CD4-positive, alpha-beta memory T cell (primary cell): ENCODE measurements at regions of chr3 and their contacts with region 1.

Region 1: GRCh38 chr3:43162230-43163084 is 56.6 kb upstream of the POMGNT2 start:
- DNase-seq: peak; percentile 66 to 79 (median 78)
- H3K4me3 ChIP-seq: peak overlapping the region; percentile 12 to 47
- H3K4me3 Mint-ChIP-seq: peak overlapping the region; percentile 80 to 92 (median 86)
- H3K27ac ChIP-seq: peak overlapping the region; percentile 60
- H3K27ac Mint-ChIP-seq: peak overlapping the region; percentile 92 to 100 (median 99)
- H3K4me1 ChIP-seq: peaks cover 27% of the 10 kb centered on the region
- H3K4me1 Mint-ChIP-seq: peaks cover 20 to 32% (median 27%) of the 10 kb centered on the region in 4 donors
- H3K27me3 ChIP-seq: no peaks in the 10 kb centered on the region
- H3K27me3 Mint-ChIP-seq: no peaks in the 10 kb centered on the region

Region 2: GRCh38 chr3:42961633-42962032 is 200.8 kb before region 1 on chr3:
- CTCF ChIA-PET with region 1: interaction called, 38 read pairs
- POLR2A ChIA-PET with region 1: no interaction called
- intact Hi-C with region 1: loop called (anchors 1 kb)
- DNase-seq: peak in 4 of 5 donors; percentile 28 to 40 (median 38)
- H3K4me3 ChIP-seq: no peak overlapping the region
- H3K4me3 Mint-ChIP-seq: no peak overlapping the region
- H3K27ac ChIP-seq: no peak overlapping the region
- H3K27ac Mint-ChIP-seq: peak overlapping the region in 1 of 7 donors; percentile 9
- H3K4me1 ChIP-seq: peaks cover 4% of the 10 kb centered on the region
- H3K4me1 Mint-ChIP-seq: peaks cover 10 to 16% (median 14%) of the 10 kb centered on the region in 4 donors
- H3K27me3 ChIP-seq: no peaks in the 10 kb centered on the region
- H3K27me3 Mint-ChIP-seq: peaks cover 1 to 2% of the 10 kb centered on the region in 2 donors

Region 3: DNA sequence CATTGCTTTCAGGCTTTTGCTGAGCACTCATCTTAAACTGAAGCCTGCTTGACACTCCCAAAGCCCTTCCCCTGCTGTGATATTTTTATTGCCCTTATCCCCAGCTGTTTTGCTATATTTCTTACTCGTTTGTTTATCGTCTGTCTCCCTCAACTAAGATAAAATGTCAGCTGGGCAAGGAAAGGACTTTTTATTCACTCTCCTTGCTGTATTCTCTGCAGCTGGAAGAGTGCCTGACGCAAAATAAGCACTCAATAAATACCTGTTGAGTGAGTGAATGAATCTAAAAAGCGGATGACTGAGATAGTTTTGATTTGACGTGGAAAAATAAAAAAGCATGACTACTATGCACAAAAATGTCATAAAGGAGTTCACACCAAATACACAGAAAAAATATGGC is 28.2 kb after region 1 on chr3:
- CTCF ChIA-PET with region 1: interaction called, 41 read pairs
- POLR2A ChIA-PET with region 1: interaction called, 51 read pairs
- intact Hi-C with region 1: loop called (anchors 1 kb)
- DNase-seq: no peak
- H3K4me3 ChIP-seq: no peak overlapping the region
- H3K4me3 Mint-ChIP-seq: no peak overlapping the region
- H3K27ac ChIP-seq: no peak overlapping the region
- H3K27ac Mint-ChIP-seq: no peak overlapping the region
- H3K4me1 ChIP-seq: peaks cover 46% of the 10 kb centered on the region
- H3K4me1 Mint-ChIP-seq: peaks cover 34 to 44% (median 40%) of the 10 kb centered on the region in 4 donors
- H3K27me3 ChIP-seq: no peaks in the 10 kb centered on the region
- H3K27me3 Mint-ChIP-seq: no peaks in the 10 kb centered on the region

Region 4: GRCh38 chr3:43215663-43216275 is 53.3 kb after region 1 on chr3:
- CTCF ChIA-PET with region 1: interaction called, 42 read pairs
- POLR2A ChIA-PET with region 1: interaction called, 6 read pairs
- intact Hi-C with region 1: no loop called
- DNase-seq: no peak
- H3K4me3 ChIP-seq: no peak overlapping the region
- H3K4me3 Mint-ChIP-seq: peak overlapping the region in 1 of 8 donors; percentile 43
- H3K27ac ChIP-seq: no peak overlapping the region
- H3K27ac Mint-ChIP-seq: peak overlapping the region in 5 of 7 donors; percentile 8 to 47 (median 32)
- H3K4me1 ChIP-seq: peaks cover 13% of the 10 kb centered on the region
- H3K4me1 Mint-ChIP-seq: peaks cover 22 to 43% (median 34%) of the 10 kb centered on the region in 4 donors
- H3K27me3 ChIP-seq: no peaks in the 10 kb centered on the region
- H3K27me3 Mint-ChIP-seq: peaks cover 0 to 1% of the 10 kb centered on the region in 2 donors

Region 5: GRCh38 chr3:43296565-43296964 is 134.1 kb after region 1 on chr3:
- CTCF ChIA-PET with region 1: interaction called, 14 read pairs
- POLR2A ChIA-PET with region 1: interaction called, 20 read pairs
- intact Hi-C with region 1: no loop called
- DNase-seq: peak; percentile 76 to 86 (median 83)
- H3K4me3 ChIP-seq: peak overlapping the region in 1 of 2 donors; percentile 16
- H3K4me3 Mint-ChIP-seq: peak overlapping the region; percentile 67 to 86 (median 79)
- H3K27ac ChIP-seq: peak overlapping the region; percentile 59
- H3K27ac Mint-ChIP-seq: peak overlapping the region; percentile 87 to 97 (median 94)
- H3K4me1 ChIP-seq: peaks cover 97% of the 10 kb centered on the region
- H3K4me1 Mint-ChIP-seq: peaks cover 59 to 88% (median 72%) of the 10 kb centered on the region in 4 donors
- H3K27me3 ChIP-seq: no peaks in the 10 kb centered on the region
- H3K27me3 Mint-ChIP-seq: no peaks in the 10 kb centered on the region

Region 6: DNA sequence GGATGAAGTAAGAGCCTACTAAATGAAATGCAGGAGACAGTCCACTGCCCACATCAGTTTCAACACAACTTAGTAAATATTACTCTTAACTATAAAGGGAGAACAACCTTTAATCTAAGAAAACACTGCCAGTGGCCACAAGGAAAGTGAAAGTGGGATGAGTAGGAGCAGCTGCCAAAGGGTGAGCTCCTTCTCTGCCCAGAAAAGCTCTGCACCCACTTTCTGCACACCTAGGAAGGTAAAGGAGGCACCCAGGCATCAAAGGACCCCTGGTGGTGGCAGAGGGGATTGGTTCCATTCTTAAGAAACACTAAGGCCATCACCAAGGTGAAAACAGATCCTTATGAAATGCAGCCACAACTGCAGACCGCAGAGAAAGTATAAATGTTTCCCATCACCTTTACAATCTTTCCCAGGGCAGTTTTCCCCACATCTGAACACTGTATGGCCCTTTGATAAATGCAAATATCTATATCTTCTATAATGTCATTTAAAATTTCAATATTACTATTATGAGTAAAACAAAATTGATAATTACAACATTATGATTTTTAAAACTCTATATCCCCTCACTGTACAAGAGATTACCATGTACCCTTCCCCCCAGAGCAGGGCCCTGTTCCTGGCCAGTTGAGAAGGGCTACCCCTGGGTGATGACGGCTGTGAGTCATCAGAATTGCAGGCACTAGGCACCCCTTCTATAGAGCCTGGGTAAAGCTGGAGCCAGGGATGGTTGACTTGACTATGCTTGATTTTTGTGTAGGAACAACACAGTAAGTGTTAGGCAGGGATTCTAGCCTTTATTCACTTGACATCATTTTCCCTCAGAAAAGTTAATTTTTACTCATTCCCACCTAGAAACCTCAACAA is 215.8 kb after region 1 on chr3:
- CTCF ChIA-PET with region 1: interaction called, 105 read pairs
- POLR2A ChIA-PET with region 1: interaction called, 34 read pairs
- intact Hi-C with region 1: loop called (anchors 1 kb)
- DNase-seq: peak; percentile 71 to 76 (median 73)
- H3K4me3 ChIP-seq: no peak overlapping the region
- H3K4me3 Mint-ChIP-seq: peak overlapping the region in 2 of 8 donors; percentile 11 to 14
- H3K27ac ChIP-seq: no peak overlapping the region
- H3K27ac Mint-ChIP-seq: peak overlapping the region in 6 of 7 donors; percentile 38 to 84 (median 69)
- H3K4me1 ChIP-seq: peaks cover 9% of the 10 kb centered on the region
- H3K4me1 Mint-ChIP-seq: peaks cover 9 to 26% (median 17%) of the 10 kb centered on the region in 4 donors
- H3K27me3 ChIP-seq: no peaks in the 10 kb centered on the region
- H3K27me3 Mint-ChIP-seq: no peaks in the 10 kb centered on the region

Region 7: GRCh38 chr3:43477600-43477999 is 315.1 kb after region 1 on chr3:
- CTCF ChIA-PET with region 1: interaction called, 3 read pairs
- POLR2A ChIA-PET with region 1: interaction called, 6 read pairs
- intact Hi-C with region 1: loop called (anchors 1 kb)
- DNase-seq: peak; percentile 77 to 88 (median 82)
- H3K4me3 ChIP-seq: peak overlapping the region in 1 of 2 donors; percentile 27
- H3K4me3 Mint-ChIP-seq: peak overlapping the region; percentile 17 to 78 (median 66)
- H3K27ac ChIP-seq: peak overlapping the region; percentile 74
- H3K27ac Mint-ChIP-seq: peak overlapping the region; percentile 83 to 99 (median 99)
- H3K4me1 ChIP-seq: peaks cover 39% of the 10 kb centered on the region
- H3K4me1 Mint-ChIP-seq: peaks cover 37 to 61% (median 49%) of the 10 kb centered on the region in 4 donors
- H3K27me3 ChIP-seq: no peaks in the 10 kb centered on the region
- H3K27me3 Mint-ChIP-seq: no peaks in the 10 kb centered on the region